ENCODE measurements at regions of chr3 and their contacts with region 1.

Region 1: GRCh38 chr3:107927361-107928083 is 163.3 kb downstream of the CD47 start:
- DNase-seq: peak; percentile 13 to 29
- ATAC-seq: peak; percentile 91 to 93
- H3K4me3 ChIP-seq: peak overlapping the region; percentile 55 to 76 (median 60)
- H3K27ac ChIP-seq: no peak overlapping the region
- H3K4me1 ChIP-seq: peaks cover 0 to 14% of the 10 kb centered on the region in 2 donors
- H3K27me3 ChIP-seq: no peaks in the 10 kb centered on the region
- CTCF ChIP-seq: peak; percentile 69 to 93 (median 78)
- POLR2A ChIP-seq: no peak

Region 2: GRCh38 chr3:107574650-107575049 is 352.9 kb before region 1 on chr3:
- in situ Hi-C with region 1: no loop called
- intact Hi-C with region 1: loop called (anchors 2 kb)
- DNase-seq: no peak
- ATAC-seq: peak; percentile 65 to 75
- H3K4me3 ChIP-seq: no peak overlapping the region
- H3K27ac ChIP-seq: no peak overlapping the region
- H3K4me1 ChIP-seq: no peaks in the 10 kb centered on the region
- H3K27me3 ChIP-seq: no peaks in the 10 kb centered on the region
- CTCF ChIP-seq: peak; percentile 20 to 58 (median 39)
- POLR2A ChIP-seq: no peak

Region 3: GRCh38 chr3:107676469-107677309 is 250.8 kb before region 1 on chr3:
- in situ Hi-C with region 1: no loop called
- intact Hi-C with region 1: loop called (anchors 5 kb)
- DNase-seq: no peak
- ATAC-seq: no peak
- H3K4me3 ChIP-seq: no peak overlapping the region
- H3K27ac ChIP-seq: no peak overlapping the region
- H3K4me1 ChIP-seq: peaks cover 0 to 11% of the 10 kb centered on the region in 2 donors
- H3K27me3 ChIP-seq: no peaks in the 10 kb centered on the region
- CTCF ChIP-seq: peak; percentile 32 to 70 (median 55)
- POLR2A ChIP-seq: no peak

Region 4: DNA sequence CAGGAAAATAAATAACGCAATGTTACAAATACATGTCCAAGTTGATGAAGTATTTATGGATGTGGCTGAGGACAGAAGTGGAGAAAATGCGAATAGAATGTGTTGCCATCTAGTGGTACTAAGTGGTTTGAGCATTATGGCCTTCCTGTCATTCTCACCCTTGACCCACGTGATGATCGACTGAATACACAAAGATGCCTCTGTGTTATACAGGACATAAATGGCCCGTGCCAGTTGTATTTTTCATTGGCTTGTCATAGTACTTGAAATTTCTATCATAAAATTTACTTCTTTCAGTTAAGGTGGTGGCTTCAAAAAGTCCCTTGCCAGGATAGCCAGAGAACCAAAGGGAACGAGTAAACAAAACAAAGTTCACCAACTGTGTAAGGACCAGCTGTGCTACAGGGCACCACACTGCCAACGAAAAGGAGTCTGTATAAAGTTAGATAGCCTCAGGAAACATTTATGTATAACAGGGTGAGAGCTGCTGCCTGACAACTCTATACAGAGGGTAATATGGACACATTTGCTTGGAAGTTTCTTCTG is 479.2 kb after region 1 on chr3:
- in situ Hi-C with region 1: loop called in 1 of 4 experiments (anchors 25 kb)
- intact Hi-C with region 1: no loop called
- DNase-seq: no peak
- ATAC-seq: peak in 1 of 2 donors; percentile 56
- H3K4me3 ChIP-seq: no peak overlapping the region
- H3K27ac ChIP-seq: no peak overlapping the region
- H3K4me1 ChIP-seq: no peaks in the 10 kb centered on the region
- H3K27me3 ChIP-seq: no peaks in the 10 kb centered on the region
- CTCF ChIP-seq: peak in 1 of 5 experiments; percentile 56
- POLR2A ChIP-seq: no peak

Measured in gastrocnemius medialis (tissue), 4 donors.